ENCODE measurements at regions of chr5 and their contacts with region 1.

Region 1: GRCh38 chr5:122845229-122846050 is at the start of gene SNX24:
- DNase-seq: peak; percentile 55 to 90
- H3K4me3 ChIP-seq: peak within 1 kb of the TSS; percentile 77 to 96
- H3K27ac ChIP-seq: peak within 1 kb of the TSS; percentile 90 to 91
- H3K4me1 ChIP-seq: peaks cover 8 to 15% of the 10 kb centered on the region in 2 donors
- H3K27me3 ChIP-seq: no peaks in the 10 kb centered on the region
- CTCF ChIP-seq: no peak
- total RNA-seq, gene SNX24: 21.1 TPM

Region 2: DNA sequence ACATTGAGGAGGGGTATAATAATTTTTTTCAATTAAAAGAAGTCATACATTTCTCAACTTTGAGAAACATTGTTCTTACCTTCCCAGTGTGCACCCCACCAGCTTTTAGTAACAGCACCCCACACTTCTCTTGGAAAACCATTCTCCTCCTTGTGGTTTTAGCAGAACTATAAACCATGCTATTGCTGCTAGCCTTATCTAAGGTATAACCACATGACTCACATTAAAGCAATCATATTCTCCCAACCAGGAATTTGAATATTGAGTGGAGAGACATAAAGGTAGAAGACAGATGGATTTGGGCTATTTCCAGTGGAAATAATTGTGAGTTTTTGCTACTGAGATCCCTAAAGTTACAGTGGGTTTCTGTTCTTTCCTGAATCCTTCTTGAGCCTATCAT is 927.2 kb before region 1 on chr5:
- intact Hi-C with region 1: no loop called
- DNase-seq: no peak
- H3K4me3 ChIP-seq: no peak overlapping the region
- H3K27ac ChIP-seq: no peak overlapping the region
- H3K4me1 ChIP-seq: no peaks in the 10 kb centered on the region
- H3K27me3 ChIP-seq: no peaks in the 10 kb centered on the region
- CTCF ChIP-seq: no peak

Region 3: GRCh38 chr5:122454541-122454940 is 390.9 kb before region 1 on chr5:
- intact Hi-C with region 1: no loop called
- DNase-seq: no peak
- H3K4me3 ChIP-seq: no peak overlapping the region
- H3K27ac ChIP-seq: no peak overlapping the region
- H3K4me1 ChIP-seq: peaks cover 0 to 4% of the 10 kb centered on the region in 2 donors
- H3K27me3 ChIP-seq: no peaks in the 10 kb centered on the region
- CTCF ChIP-seq: no peak

Region 4: DNA sequence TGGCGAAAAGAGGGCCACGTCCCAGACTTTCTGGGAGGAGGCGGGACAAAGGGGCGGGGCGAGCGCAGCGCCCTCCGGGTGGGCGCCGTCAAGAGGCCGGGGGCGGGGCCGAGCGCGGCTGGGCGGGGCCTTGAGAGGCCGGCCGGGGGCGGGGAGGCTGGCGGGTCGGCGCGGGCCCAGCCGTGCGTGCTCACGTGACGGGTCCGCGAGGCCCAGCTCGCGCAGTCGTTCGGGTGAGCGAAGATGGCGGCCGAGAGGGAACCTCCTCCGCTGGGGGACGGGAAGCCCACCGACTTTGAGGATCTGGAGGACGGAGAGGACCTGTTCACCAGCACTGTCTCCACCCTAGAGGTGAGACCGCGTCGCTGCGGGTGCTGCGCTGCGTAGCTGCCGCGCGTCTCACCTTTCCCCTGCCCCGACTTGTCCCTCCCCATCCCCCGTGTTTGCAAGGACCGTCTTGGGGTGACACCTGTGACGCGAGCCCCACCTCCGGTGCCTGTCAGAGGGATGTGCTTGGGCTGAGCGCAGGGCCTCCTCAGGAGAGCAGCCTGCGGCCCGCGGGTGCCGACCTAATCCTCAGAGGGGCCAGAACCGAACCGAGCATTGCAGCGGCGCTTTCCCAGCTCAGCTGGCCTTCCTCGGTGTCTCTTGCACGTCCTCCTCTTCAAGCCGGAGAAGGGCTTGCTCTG is 70.4 kb before region 1 on chr5 and contains the start of gene SNX2:
- intact Hi-C with region 1: loop called (anchors 1 kb)
- DNase-seq: peak; percentile 71 to 97
- H3K4me3 ChIP-seq: peak within 1 kb of the TSS; percentile 77 to 99
- H3K27ac ChIP-seq: peak within 1 kb of the TSS; percentile 79 to 94
- H3K4me1 ChIP-seq: peaks cover 0 to 15% of the 10 kb centered on the region in 2 donors
- H3K27me3 ChIP-seq: no peaks in the 10 kb centered on the region
- CTCF ChIP-seq: no peak
- total RNA-seq, gene SNX2: 15.6 TPM

Region 5: DNA sequence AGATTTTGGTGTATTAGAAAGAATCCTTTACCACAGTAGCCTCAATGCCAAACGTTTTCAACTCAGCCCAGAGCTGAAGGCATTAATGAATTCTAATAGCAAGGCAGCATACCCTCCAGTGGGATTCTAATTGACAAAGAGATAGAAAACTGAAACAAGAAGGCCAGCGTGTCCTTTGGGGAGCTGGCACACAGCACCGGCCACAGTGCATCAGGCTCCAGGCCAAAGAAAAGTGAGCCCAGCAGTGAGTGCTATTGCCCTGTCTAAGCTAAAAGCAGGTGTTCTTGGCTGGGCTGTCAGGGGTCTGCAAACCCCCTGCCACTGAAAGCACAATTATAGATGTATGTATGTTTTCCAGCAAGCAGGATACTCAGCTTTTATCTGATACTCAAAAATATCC is 150.7 kb after region 1 on chr5:
- intact Hi-C with region 1: no loop called
- DNase-seq: no peak
- H3K4me3 ChIP-seq: no peak overlapping the region
- H3K27ac ChIP-seq: no peak overlapping the region
- H3K4me1 ChIP-seq: no peaks in the 10 kb centered on the region
- H3K27me3 ChIP-seq: no peaks in the 10 kb centered on the region
- CTCF ChIP-seq: no peak

Region 6: DNA sequence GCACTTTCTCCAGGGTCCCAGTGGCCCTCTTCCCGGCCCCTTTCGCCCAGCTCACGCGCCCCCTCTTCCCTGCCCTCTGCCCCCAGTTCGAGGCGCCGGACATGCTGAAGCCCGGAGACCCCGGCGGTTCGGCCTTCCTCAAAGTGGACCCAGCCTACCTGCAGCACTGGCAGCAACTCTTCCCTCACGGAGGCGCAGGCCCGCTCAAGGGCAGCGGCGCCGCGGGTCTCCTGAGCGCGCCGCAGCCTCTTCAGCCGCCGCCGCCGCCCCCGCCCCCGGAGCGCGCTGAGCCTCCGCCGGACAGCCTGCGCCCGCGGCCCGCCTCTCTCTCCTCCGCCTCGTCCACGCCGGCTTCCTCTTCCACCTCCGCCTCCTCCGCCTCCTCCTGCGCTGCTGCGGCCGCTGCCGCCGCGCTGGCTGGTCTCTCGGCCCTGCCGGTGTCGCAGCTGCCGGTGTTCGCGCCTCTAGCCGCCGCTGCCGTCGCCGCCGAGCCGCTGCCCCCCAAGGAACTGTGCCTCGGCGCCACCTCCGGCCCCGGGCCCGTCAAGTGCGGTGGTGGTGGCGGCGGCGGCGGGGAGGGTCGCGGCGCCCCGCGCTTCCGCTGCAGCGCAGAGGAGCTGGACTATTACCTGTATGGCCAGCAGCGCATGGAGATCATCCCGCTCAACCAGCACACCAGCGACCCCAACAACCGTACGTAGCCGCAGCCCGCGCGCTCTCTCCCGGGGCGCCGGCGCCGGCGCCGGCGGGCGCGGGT is 244.7 kb after region 1 on chr5:
- intact Hi-C with region 1: loop called (anchors 5 kb)
- DNase-seq: no peak
- H3K4me3 ChIP-seq: peak overlapping the region; percentile 71 to 97
- H3K27ac ChIP-seq: peak overlapping the region; percentile 95 to 99
- H3K4me1 ChIP-seq: no peaks in the 10 kb centered on the region
- H3K27me3 ChIP-seq: no peaks in the 10 kb centered on the region
- CTCF ChIP-seq: no peak

Region 7: DNA sequence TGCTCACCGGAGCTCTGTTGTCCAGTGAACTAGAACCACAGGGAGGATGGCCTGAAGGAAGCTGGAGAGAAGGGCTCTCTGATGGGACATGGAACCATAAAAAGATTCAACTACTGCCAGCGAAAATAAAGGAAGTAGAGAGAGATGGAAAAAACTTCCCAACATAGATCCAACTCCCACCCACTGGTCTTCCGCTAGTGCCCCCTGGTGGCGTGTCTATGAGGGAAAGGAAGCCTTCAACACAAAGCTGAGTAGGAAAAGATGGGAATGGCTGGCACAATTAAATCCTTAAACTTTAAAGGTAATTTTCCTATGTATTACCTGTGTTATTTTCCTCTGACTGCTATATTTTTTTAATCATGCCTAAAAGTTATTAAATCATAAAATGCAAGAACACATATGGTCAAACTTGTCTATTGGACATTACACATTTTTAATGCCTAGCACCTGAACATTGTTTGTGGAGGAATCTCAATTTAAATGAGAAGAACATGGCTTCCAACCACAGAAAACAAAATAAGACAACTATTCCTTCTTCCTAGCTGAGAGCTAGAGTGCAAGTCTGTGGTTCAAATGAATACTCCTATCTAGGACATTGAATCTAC is 526.2 kb after region 1 on chr5:
- intact Hi-C with region 1: loop called (anchors 5 kb)
- DNase-seq: peak in 1 of 2 donors; percentile 74
- H3K4me3 ChIP-seq: no peak overlapping the region
- H3K27ac ChIP-seq: no peak overlapping the region
- H3K4me1 ChIP-seq: peaks cover 0 to 8% of the 10 kb centered on the region in 2 donors
- H3K27me3 ChIP-seq: no peaks in the 10 kb centered on the region
- CTCF ChIP-seq: peak in 2 of 3 experiments; percentile 44 to 50